Heart left ventricle (tissue), 16 donors: ENCODE measurements at regions of chr11 and their contacts with region 1.

Region 1: DNA sequence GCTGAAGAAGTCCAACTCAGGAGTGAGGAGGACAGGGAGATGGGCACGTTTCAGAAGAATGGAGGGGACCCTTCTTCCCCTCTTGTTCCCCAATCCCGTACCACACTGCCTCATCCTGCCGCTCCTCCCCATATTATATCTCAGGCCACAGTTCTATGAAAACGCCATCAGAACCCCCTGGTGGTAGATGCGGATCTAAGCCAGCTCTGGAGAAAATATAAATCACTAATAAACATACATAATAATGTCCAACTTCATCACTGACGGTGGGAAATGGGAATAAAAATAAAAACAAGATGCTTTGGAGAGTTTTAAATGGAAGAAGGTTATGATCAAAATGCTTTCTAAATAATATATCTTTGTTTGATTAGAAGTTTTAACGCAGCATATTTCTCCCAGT is 400.3 kb downstream of the CADM1 start:
- DNase-seq: no peak
- ATAC-seq: no peak
- H3K4me3 ChIP-seq: no peak overlapping the region
- H3K27ac ChIP-seq: no peak overlapping the region
- H3K4me1 ChIP-seq: no peaks in the 10 kb centered on the region
- H3K27me3 ChIP-seq: peaks cover 0 to 7% (median 0%) of the 10 kb centered on the region in 9 donors
- CTCF ChIP-seq: no peak
- POLR2A ChIP-seq: no peak

Region 2: DNA sequence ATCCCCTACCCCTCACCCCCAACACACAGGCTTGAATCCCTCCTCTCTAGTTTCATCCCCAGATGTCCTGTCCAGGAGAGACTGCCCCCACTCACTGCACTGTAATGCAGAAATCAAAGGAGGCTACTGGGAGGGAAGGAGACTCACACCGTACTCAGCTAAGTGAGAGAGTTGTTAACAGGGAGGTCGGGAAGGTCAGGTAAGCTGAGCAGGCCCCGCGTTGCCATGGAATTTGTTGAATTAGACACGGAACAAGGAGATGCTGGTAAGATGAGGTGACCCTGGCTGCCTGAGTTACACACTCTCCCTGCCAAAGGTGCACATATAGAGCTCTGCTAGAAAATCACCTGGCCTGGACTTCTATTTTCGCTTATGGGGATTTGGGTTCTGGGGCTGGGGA is 227.7 kb before region 1 on chr11:
- intact Hi-C with region 1: no loop called
- DNase-seq: no peak
- ATAC-seq: no peak
- H3K4me3 ChIP-seq: no peak overlapping the region
- H3K27ac ChIP-seq: no peak overlapping the region
- H3K4me1 ChIP-seq: no peaks in the 10 kb centered on the region
- H3K27me3 ChIP-seq: no peaks in the 10 kb centered on the region
- CTCF ChIP-seq: no peak
- POLR2A ChIP-seq: no peak

Region 3: GRCh38 chr11:114977651-114978050 is 126.3 kb before region 1 on chr11:
- intact Hi-C with region 1: loop called in 1 of 10 experiments (anchors 10 kb)
- DNase-seq: no peak
- ATAC-seq: peak in 1 of 4 donors; percentile 34
- H3K4me3 ChIP-seq: no peak overlapping the region
- H3K27ac ChIP-seq: no peak overlapping the region
- H3K4me1 ChIP-seq: peaks cover 0 to 3% (median 0%) of the 10 kb centered on the region in 12 donors
- H3K27me3 ChIP-seq: no peaks in the 10 kb centered on the region
- CTCF ChIP-seq: no peak
- POLR2A ChIP-seq: no peak

Region 4: DNA sequence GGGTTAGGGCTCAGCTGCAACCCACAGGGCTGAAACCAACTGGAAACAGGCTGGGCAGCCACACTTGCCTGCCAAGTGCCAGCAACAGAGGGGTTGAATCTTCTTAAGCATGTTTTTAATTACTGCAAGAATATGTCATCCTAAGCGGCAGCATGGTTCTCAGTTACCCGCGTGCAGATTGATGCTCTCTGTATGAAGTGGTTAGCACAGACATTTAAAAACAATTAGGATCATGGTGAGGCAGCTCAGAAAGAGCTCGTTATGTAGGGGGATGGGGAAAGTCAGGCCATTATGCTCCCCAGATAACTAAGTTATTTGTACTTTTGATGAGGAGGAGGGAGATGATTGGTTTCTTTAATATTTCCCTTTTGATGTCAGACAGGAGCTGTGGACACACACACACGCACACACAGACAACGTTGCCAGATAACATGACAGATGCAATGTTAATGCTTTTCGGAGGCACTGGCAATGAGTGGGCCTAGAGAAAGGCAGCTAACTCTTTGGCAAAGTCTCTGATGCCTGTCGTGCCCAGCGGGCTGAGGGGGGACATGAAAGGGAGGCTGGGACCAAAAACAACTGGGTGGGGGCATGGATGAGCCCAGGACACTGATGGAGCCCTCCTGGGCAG is 35.9 kb before region 1 on chr11:
- intact Hi-C with region 1: no loop called
- DNase-seq: no peak
- ATAC-seq: no peak
- H3K4me3 ChIP-seq: no peak overlapping the region
- H3K27ac ChIP-seq: no peak overlapping the region
- H3K4me1 ChIP-seq: no peaks in the 10 kb centered on the region
- H3K27me3 ChIP-seq: peaks cover 0 to 4% (median 0%) of the 10 kb centered on the region in 9 donors
- CTCF ChIP-seq: no peak
- POLR2A ChIP-seq: no peak

Region 5: GRCh38 chr11:115170133-115170815 is 66.4 kb after region 1 on chr11:
- intact Hi-C with region 1: no loop called
- DNase-seq: no peak
- ATAC-seq: no peak
- H3K4me3 ChIP-seq: no peak overlapping the region
- H3K27ac ChIP-seq: no peak overlapping the region
- H3K4me1 ChIP-seq: peaks cover 0 to 16% (median 4%) of the 10 kb centered on the region in 12 donors
- H3K27me3 ChIP-seq: peaks cover 0 to 3% (median 0%) of the 10 kb centered on the region in 9 donors
- CTCF ChIP-seq: peak; percentile 52 to 77 (median 67)
- POLR2A ChIP-seq: no peak

Region 6: GRCh38 chr11:115996125-115996807 is 892.3 kb after region 1 on chr11:
- intact Hi-C with region 1: no loop called
- DNase-seq: no peak
- ATAC-seq: no peak
- H3K4me3 ChIP-seq: no peak overlapping the region
- H3K27ac ChIP-seq: no peak overlapping the region
- H3K4me1 ChIP-seq: peaks cover 0 to 8% (median 0%) of the 10 kb centered on the region in 12 donors
- H3K27me3 ChIP-seq: no peaks in the 10 kb centered on the region
- CTCF ChIP-seq: no peak
- POLR2A ChIP-seq: no peak